ENCODE measurements at regions of chr13 and their contacts with region 1.

Region 1: DNA sequence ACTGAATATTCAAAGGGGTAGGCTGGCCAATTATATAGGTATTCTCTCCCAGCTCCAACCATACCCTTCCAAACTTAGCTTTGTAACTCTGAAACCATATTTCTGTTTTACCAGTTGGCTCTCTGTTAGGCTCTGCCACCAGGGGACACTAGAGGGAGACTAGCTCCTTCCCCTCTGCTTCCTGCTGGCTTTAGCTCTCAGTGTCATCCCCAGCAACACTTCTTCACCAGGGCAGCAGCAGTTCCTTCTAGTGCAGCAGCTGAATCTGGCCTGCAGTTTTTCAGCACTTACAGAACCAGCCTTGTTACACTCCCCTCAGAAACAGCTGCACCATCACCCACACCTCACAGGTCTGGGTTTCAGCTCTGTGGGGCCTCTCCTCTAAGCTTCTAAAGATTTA is 51.0 kb upstream of the DOCK9 start:
- DNase-seq: no peak
- H3K4me3 ChIP-seq: no peak overlapping the region
- CTCF ChIP-seq: no peak
- POLR2A ChIP-seq: no peak

Region 2: DNA sequence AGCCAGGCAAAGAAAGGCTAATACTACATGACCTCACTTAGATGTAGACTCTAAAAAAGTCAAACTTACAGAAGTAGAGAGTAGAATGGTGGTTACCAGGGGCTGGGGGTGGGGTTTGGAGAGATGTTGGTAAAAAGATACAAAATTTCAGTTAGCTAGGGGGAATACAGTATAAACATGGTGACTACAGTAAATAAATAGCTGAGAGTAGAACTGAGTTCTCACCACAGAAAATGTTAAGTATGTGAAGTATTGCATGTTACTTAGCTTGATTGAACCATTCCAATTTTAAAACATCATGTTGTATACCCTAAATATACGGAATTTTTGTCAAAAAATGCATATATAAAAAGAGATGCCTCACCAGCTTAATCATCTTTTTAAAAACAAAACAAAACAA is 16.5 kb after region 1 on chr13:
- intact Hi-C with region 1: loop called (anchors 1 kb)
- DNase-seq: no peak
- H3K4me3 ChIP-seq: no peak overlapping the region
- CTCF ChIP-seq: no peak
- POLR2A ChIP-seq: no peak

Measured in lower leg skin (tissue), 4 donors.